IMR-90 (cell line): ENCODE measurements at regions of chr9 and their contacts with region 1.

Region 1: DNA sequence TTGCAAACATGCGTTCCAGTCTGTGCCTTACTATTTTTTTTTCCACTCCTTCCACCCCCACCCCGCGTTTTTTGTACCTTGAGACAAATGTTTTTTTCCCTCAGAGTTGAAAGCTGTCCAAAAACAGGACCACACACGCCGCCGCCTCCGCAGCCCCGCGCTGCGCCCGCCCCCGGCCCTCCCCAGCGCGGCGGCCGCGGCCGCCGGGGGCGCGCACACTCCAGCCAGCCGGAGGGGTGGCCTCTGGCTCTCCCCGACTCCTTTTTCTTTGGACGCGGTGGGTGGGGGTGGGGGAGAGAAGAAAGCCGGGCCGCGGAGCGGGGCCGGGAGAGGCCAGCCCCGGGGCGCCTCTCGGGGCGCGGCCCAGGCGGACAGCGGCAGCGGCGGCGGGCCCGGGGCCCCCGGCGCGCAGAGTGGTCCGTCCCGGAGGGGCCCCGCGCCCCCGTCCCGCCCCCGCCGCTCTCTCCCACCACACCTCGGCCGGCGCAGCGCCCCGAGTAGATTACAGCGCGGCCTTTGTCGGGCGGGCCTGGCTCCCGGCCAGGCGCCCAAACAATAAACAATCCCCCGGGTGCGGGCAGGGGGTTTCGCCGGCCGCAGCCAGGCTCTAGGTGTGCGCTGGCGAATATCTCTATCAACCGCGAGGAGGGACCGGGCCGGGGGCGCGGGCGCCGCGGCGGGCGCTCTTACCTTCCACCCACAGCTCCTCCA is 10.9 kb downstream of the PTCH1 start:
- DNase-seq: peak; percentile 63
- ATAC-seq: peak; percentile 12; the same call in 1 of the 2 replicates
- H3K4me3 ChIP-seq: peak overlapping the region; percentile 84
- H3K27ac ChIP-seq: peak overlapping the region; percentile 88
- H3K4me1 ChIP-seq: peaks cover 5% of the 10 kb centered on the region
- H3K27me3 ChIP-seq: no peaks in the 10 kb centered on the region
- CTCF ChIP-seq: no peak
- POLR2A ChIP-seq: no peak
- RAD21 ChIP-seq: no peak

Region 2: DNA sequence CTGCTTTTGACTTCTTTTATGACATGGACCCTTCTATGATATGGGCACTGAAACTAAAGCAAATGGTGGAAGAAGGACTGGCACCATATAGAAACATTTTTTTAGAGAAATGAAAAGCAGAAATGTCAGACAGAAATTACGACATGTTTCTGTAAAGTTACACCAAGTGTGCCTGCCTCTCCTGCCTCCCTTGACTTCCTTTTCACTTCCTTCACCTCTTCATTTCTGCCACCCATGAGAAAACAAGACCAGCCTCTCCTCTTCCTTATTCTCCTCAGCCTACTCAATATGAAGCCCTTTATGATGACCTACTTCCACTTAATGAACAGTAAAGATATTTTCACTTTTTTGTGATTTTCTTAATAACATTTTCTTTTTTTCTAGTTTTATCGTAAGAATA is 414.1 kb after region 1 on chr9:
- CTCF ChIA-PET with region 1: no interaction called
- POLR2A ChIA-PET with region 1: interaction called, 22 read pairs
- dilution Hi-C with region 1: no loop called
- in situ Hi-C with region 1: no loop called
- intact Hi-C with region 1: no loop called
- DNase-seq: no peak
- ATAC-seq: no peak
- H3K4me3 ChIP-seq: no peak overlapping the region
- H3K27ac ChIP-seq: no peak overlapping the region
- H3K4me1 ChIP-seq: no peaks in the 10 kb centered on the region
- H3K27me3 ChIP-seq: no peaks in the 10 kb centered on the region
- CTCF ChIP-seq: no peak
- POLR2A ChIP-seq: no peak
- RAD21 ChIP-seq: no peak